B cell (primary cell): ENCODE measurements at regions of chr9 and their contacts with region 1.

Region 1: DNA sequence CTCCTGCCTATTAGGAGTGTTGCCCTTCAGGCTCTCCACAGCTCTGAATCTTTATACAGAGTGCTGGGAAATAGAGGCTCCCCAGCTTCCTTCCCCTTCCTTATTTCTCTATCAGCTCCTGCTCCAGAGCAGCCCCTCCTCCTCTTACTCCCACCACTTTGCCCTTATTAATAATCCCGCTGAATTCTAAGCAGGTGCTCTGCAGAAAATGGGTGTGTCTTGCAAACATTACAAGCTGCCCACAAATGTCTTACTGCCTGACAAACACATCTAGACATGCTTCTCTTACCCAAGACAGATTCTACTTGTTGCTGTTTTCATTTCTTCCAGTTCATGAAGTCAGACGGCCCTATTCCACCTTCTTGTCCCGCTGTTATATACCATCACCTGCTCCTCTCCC is 6.4 kb downstream of the PHF24 start:
- DNase-seq: no peak
- ATAC-seq: no peak
- H3K4me3 ChIP-seq: no peak overlapping the region
- H3K4me3 Mint-ChIP-seq: no peak overlapping the region
- H3K27ac ChIP-seq: no peak overlapping the region
- H3K27ac Mint-ChIP-seq: no peak overlapping the region
- H3K4me1 ChIP-seq: no peaks in the 10 kb centered on the region
- H3K4me1 Mint-ChIP-seq: no peaks in the 10 kb centered on the region
- H3K27me3 ChIP-seq: peaks cover 0 to 52% (median 42%) of the 10 kb centered on the region in 4 experiments
- H3K27me3 Mint-ChIP-seq: peaks cover 69% of the 10 kb centered on the region
- CTCF ChIP-seq: no peak

Region 2: GRCh38 chr9:34954225-34954624 is 10.2 kb before region 1 on chr9:
- CTCF ChIA-PET with region 1: no interaction called
- POLR2A ChIA-PET with region 1: interaction called, 4 read pairs
- intact Hi-C with region 1: loop called (anchors 1 kb)
- DNase-seq: no peak
- ATAC-seq: no peak
- H3K4me3 ChIP-seq: no peak overlapping the region
- H3K4me3 Mint-ChIP-seq: no peak overlapping the region
- H3K27ac ChIP-seq: no peak overlapping the region
- H3K27ac Mint-ChIP-seq: no peak overlapping the region
- H3K4me1 ChIP-seq: peaks cover 9 to 10% of the 10 kb centered on the region in 2 donors
- H3K4me1 Mint-ChIP-seq: peaks cover 2% of the 10 kb centered on the region
- H3K27me3 ChIP-seq: peaks cover 0 to 27% (median 27%) of the 10 kb centered on the region in 4 experiments
- H3K27me3 Mint-ChIP-seq: peaks cover 37% of the 10 kb centered on the region
- CTCF ChIP-seq: no peak

Region 3: GRCh38 chr9:35293378-35293964 is 329.0 kb after region 1 on chr9:
- CTCF ChIA-PET with region 1: no interaction called
- POLR2A ChIA-PET with region 1: no interaction called
- intact Hi-C with region 1: no loop called
- DNase-seq: no peak
- ATAC-seq: no peak
- H3K4me3 ChIP-seq: no peak overlapping the region
- H3K4me3 Mint-ChIP-seq: no peak overlapping the region
- H3K27ac ChIP-seq: no peak overlapping the region
- H3K27ac Mint-ChIP-seq: no peak overlapping the region
- H3K4me1 ChIP-seq: no peaks in the 10 kb centered on the region
- H3K4me1 Mint-ChIP-seq: no peaks in the 10 kb centered on the region
- H3K27me3 ChIP-seq: peaks cover 0 to 11% (median 1%) of the 10 kb centered on the region in 4 experiments
- H3K27me3 Mint-ChIP-seq: peaks cover 18% of the 10 kb centered on the region
- CTCF ChIP-seq: no peak